Activated CD8-positive, alpha-beta T cell treated with anti-CD3 and anti-CD28 coated beads for 36 hours (primary cell): ENCODE measurements at regions of chr6 and their contacts with region 1.

Region 1: DNA sequence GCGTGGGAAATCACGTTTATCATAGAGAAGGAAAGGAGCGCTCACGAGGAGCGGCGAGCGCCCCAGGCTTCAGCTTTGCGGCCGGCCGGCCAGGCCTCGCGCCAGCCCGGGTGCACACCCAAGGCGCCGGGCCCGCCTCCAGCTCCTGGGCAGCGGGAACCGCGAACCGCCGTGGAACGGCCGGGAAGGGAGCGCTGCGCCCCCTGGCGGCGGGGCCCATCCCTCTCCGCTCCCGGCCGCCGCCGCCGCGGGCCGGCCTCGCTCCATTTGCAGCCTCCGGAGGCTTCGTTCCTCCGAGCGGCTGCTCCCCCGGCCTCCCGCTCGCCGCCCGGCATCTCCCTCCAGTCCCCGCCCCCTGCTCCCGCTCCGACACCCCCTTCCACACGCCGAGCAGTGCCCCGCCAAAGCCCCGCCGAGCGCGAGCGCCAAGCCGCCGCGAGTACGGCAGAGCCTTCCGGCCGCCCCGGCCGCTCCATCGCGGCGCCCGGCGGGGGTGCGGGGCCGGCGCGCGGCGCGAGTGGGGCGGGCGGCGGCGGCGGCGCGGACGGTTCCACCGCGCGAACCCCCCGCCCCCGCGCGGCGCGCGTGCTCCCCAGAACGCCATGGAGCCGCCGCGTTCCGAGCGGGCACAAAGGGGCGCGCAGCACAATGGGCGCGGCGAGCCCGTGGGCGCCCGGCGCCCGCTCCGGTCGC is 956 bp downstream of the BEND3 start:
- DNase-seq: peak; percentile 66
- ATAC-seq: peak; percentile 64
- H3K4me3 Mint-ChIP-seq: peak overlapping the region; percentile 79
- H3K27ac Mint-ChIP-seq: peak overlapping the region; percentile 76
- H3K4me1 Mint-ChIP-seq: peaks cover 16% of the 10 kb centered on the region
- H3K27me3 Mint-ChIP-seq: peaks cover 7% of the 10 kb centered on the region
- CTCF ChIP-seq: peak; percentile 93

Region 2: GRCh38 chr6:107030151-107030550 is 84.2 kb before region 1 on chr6:
- CTCF ChIA-PET with region 1: interaction called, 21 read pairs
- POLR2A ChIA-PET with region 1: interaction called, 7 read pairs
- intact Hi-C with region 1: no loop called
- DNase-seq: no peak
- ATAC-seq: no peak
- H3K4me3 Mint-ChIP-seq: peak overlapping the region; percentile 93
- H3K27ac Mint-ChIP-seq: peak overlapping the region; percentile 36
- H3K4me1 Mint-ChIP-seq: peaks cover 33% of the 10 kb centered on the region
- H3K27me3 Mint-ChIP-seq: no peaks in the 10 kb centered on the region
- CTCF ChIP-seq: no peak

Region 3: DNA sequence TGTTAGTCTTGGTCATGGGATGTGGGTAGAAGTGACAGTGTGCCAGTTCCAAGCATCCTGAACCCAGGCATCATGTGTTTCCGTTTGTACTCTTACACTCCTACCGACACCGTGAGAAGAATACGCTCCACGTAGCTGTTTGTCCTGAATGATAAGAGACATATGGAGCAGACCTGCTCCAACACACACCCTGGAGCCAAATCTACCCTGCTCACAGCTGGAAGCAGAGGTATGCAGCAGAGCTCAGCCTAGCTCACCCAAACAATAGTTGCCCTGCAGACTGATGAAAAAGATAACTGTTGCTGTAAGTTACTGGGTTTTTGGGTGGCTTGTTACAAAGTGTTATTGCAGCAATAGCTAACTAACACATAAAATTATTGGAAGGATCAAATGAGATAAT is 359.3 kb after region 1 on chr6:
- CTCF ChIA-PET with region 1: no interaction called
- POLR2A ChIA-PET with region 1: no interaction called
- intact Hi-C with region 1: no loop called
- DNase-seq: no peak
- ATAC-seq: no peak
- H3K4me3 Mint-ChIP-seq: no peak overlapping the region
- H3K27ac Mint-ChIP-seq: no peak overlapping the region
- H3K4me1 Mint-ChIP-seq: no peaks in the 10 kb centered on the region
- H3K27me3 Mint-ChIP-seq: peaks cover 7% of the 10 kb centered on the region
- CTCF ChIP-seq: no peak